ENCODE measurements at regions of chr7 and their contacts with region 1.

Region 1: DNA sequence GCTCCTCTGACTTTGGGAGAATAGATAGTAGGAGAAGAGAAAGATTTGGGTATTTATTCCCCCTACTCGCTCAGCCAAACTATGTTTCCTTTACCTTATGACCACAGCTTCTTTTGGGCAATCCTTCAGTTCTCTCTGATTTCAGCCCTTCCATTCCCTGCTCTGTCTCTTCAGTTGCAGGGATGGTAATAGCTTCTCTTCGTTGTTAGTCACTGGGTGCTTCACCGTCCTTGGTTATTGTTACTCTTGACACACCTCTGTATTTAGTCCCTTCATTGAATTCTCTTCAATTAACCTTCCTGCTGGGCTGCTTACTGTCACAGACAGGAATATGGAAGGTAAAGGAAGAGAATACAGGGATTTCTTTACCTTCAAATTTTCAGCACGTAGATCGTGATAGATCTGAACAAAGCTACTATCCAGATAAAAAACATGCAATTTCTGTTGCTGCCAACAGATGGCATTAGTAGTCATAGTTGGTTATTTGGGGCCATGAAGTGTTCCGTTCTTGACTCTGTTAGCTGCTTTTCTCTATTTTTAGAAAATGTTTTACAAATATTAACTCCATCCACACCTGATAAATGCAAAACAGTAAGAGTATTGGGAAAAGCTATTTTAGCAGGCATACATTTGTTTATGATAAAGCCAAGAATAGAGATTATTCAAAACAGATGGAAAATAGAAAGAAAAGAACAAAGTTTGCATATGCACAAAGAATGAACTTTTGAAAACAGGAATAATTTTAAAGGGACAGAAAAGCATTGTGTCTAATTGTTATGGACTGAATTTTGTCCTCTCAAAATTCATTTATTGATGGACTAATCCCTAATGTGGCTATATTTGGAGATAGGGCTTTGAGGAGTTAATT is 14.0 kb upstream of the PTTG1IP2 start:
- DNase-seq: peak in 5 of 9 donors; percentile 32 to 49 (median 40)
- ATAC-seq: peak; percentile 77
- H3K4me3 ChIP-seq: no peak overlapping the region
- H3K4me3 Mint-ChIP-seq: peak overlapping the region in 7 of 10 donors; percentile 37 to 70 (median 56)
- H3K27ac ChIP-seq: no peak overlapping the region
- H3K27ac Mint-ChIP-seq: no peak overlapping the region
- H3K4me1 ChIP-seq: no peaks in the 10 kb centered on the region
- H3K4me1 Mint-ChIP-seq: peaks cover 5 to 8% (median 6%) of the 10 kb centered on the region in 7 donors
- H3K27me3 ChIP-seq: no peaks in the 10 kb centered on the region
- H3K27me3 Mint-ChIP-seq: peaks cover 0 to 22% (median 10%) of the 10 kb centered on the region in 5 donors

Region 2: DNA sequence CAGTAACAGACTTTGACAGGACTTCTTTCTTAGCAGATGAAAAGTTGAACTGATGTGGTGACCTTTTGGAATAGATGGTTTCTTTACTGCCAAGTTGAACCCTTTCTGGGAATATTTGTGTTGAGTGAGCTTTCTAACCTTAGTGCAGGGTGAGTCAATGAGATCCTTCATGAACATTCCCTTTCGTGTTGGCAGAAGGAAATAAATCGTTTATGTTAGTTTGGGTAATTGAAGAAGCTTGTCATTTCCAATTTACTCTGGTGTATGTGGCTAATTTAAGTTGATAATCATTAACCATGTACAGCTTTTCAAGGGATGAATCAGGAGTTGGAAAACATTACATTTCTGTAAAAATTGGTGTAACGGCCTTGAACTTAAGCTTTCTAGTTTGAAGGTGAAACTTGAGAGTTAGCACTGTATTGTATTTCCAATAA is 57.4 kb after region 1 on chr7:
- CTCF ChIA-PET with region 1: no interaction called
- POLR2A ChIA-PET with region 1: no interaction called
- intact Hi-C with region 1: no loop called
- DNase-seq: no peak
- ATAC-seq: no peak
- H3K4me3 ChIP-seq: no peak overlapping the region
- H3K4me3 Mint-ChIP-seq: no peak overlapping the region
- H3K27ac ChIP-seq: no peak overlapping the region
- H3K27ac Mint-ChIP-seq: no peak overlapping the region
- H3K4me1 ChIP-seq: no peaks in the 10 kb centered on the region
- H3K4me1 Mint-ChIP-seq: no peaks in the 10 kb centered on the region
- H3K27me3 ChIP-seq: no peaks in the 10 kb centered on the region
- H3K27me3 Mint-ChIP-seq: peaks cover 0 to 6% (median 0%) of the 10 kb centered on the region in 5 donors

Region 3: GRCh38 chr7:90595801-90596671 is 140.6 kb after region 1 on chr7 and contains the start of gene CDK14:
- CTCF ChIA-PET with region 1: no interaction called
- POLR2A ChIA-PET with region 1: no interaction called
- intact Hi-C with region 1: loop called in 1 of 2 experiments (anchors 1 kb)
- DNase-seq: peak in 3 of 9 donors; percentile 8 to 69 (median 40)
- ATAC-seq: peak; percentile 82
- H3K4me3 ChIP-seq: no peak within 1 kb of the TSS
- H3K4me3 Mint-ChIP-seq: peak within 1 kb of the TSS; percentile 67 to 85 (median 79)
- H3K27ac ChIP-seq: no peak within 1 kb of the TSS
- H3K27ac Mint-ChIP-seq: peak within 1 kb of the TSS in 1 of 9 donors; percentile 7
- H3K4me1 ChIP-seq: peaks cover 0 to 8% of the 10 kb centered on the region in 2 donors
- H3K4me1 Mint-ChIP-seq: peaks cover 4 to 25% (median 18%) of the 10 kb centered on the region in 7 donors
- H3K27me3 ChIP-seq: peaks cover 0 to 12% of the 10 kb centered on the region in 2 donors
- H3K27me3 Mint-ChIP-seq: peaks cover 34 to 69% (median 56%) of the 10 kb centered on the region in 5 donors
- total RNA-seq, gene CDK14: 0.05 to 9.9 (median 1.0) TPM

Region 4: GRCh38 chr7:91034459-91035368 is 579.3 kb after region 1 on chr7:
- CTCF ChIA-PET with region 1: no interaction called
- POLR2A ChIA-PET with region 1: no interaction called
- intact Hi-C with region 1: loop called in 1 of 2 experiments (anchors 1 kb)
- DNase-seq: peak in 2 of 9 donors; percentile 9
- ATAC-seq: no peak
- H3K4me3 ChIP-seq: no peak overlapping the region
- H3K4me3 Mint-ChIP-seq: no peak overlapping the region
- H3K27ac ChIP-seq: no peak overlapping the region
- H3K27ac Mint-ChIP-seq: no peak overlapping the region
- H3K4me1 ChIP-seq: no peaks in the 10 kb centered on the region
- H3K4me1 Mint-ChIP-seq: no peaks in the 10 kb centered on the region
- H3K27me3 ChIP-seq: no peaks in the 10 kb centered on the region
- H3K27me3 Mint-ChIP-seq: peaks cover 0 to 4% (median 0%) of the 10 kb centered on the region in 5 donors